GM13977 (cell line): ENCODE measurements at regions of chr2 and their contacts with region 1.

Region 1: GRCh38 chr2:27291865-27292264 is 9.6 kb downstream of the TRIM54 start:
- DNase-seq: no peak
- CTCF ChIP-seq: no peak

Region 2: DNA sequence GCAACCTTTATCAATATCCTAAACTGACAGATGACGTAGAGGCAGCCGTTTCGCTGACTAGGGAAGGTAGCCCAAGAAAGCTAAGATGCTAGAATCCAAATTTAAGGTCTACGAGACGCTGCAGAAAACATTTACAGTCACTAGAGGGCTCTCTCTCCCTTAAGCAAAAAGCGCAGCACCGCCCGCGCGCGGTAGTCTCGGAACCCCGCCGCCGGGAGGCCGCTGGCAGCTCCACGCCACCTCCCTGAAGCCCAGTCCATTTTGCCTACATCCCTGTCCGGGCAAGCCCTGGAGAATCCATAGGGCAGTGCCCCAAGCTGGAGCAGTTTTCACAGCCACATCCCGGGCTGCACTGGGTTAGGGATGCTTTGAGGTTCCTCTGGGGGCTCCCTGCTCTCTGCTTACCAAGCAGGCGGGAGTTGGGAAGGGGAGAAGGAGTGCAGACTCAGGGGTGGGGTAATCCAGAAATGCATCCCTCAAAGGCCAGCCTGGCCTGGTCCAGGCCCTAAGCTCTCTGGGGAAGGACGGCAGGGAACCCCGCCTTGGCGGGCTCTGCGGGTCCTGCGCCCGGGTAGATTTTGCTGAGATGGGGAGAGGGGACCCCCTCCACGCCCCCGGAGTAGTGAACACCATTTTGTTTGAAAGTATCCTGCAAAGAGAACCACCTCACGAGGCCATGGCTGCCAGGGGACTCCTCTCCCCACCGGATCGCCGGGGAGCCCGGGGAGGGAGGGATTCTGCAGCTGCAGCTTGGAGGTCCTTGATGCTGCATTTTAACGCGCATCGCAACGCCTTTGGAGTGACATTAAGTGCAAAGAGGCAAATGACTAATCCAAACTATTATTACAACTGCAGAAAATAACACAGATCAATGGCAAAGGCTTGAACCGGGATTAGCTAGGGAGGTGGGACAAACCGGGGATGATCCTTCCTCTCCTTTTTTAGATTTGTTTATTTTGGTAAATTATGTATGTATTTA is 445.2 kb before region 1 on chr2:
- in situ Hi-C with region 1: loop called (anchors 25 kb)
- DNase-seq: peak; percentile 85
- CTCF ChIP-seq: peak; percentile 76

Region 3: GRCh38 chr2:26970244-26970920 is 321.5 kb before region 1 on chr2 and contains the start of gene MAPRE3:
- in situ Hi-C with region 1: loop called (anchors 25 kb)
- DNase-seq: peak; percentile 95
- CTCF ChIP-seq: no peak

Region 4: DNA sequence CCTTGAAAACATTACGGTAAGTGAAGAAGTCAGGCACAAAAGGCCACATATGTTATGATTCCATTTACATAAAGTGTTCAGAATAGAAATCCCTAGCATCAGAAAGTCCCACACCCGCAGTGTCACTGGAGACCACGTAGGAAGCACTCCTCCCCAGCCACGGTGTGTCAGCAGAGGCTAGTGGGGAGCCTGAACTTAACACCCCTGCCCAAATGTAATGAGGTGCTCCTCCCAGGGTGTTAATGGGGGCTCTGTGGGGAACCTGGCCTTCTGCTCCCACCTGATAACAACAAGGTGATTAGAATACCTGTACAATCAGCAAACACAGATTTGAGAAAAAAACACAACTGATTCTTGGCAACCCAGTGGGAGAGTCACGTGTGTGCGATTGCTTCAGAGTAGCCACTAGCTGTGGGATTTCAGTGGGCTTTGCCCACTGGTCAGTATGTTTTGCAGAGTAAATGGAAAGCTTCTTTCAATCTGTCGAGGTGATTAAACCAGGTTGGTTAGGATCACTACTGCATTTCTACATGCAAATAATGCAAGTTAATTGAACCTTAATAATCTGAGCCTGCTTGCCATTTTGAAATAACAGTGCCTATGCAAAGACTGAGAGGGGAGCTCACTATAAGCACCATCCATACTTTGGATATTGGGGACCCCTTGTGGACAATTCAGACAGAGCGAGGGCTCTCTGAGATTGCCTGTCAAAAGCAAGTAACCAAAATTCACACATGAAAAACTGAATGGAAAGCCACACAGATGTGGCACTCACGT is 100.6 kb before region 1 on chr2:
- in situ Hi-C with region 1: no loop called
- DNase-seq: peak; percentile 69
- CTCF ChIP-seq: peak; percentile 72